Activated CD4-positive, alpha-beta memory T cell treated with anti-CD3 and anti-CD28 coated beads for 36 hours (primary cell): ENCODE measurements at regions of chr14 and their contacts with region 1.

Region 1: DNA sequence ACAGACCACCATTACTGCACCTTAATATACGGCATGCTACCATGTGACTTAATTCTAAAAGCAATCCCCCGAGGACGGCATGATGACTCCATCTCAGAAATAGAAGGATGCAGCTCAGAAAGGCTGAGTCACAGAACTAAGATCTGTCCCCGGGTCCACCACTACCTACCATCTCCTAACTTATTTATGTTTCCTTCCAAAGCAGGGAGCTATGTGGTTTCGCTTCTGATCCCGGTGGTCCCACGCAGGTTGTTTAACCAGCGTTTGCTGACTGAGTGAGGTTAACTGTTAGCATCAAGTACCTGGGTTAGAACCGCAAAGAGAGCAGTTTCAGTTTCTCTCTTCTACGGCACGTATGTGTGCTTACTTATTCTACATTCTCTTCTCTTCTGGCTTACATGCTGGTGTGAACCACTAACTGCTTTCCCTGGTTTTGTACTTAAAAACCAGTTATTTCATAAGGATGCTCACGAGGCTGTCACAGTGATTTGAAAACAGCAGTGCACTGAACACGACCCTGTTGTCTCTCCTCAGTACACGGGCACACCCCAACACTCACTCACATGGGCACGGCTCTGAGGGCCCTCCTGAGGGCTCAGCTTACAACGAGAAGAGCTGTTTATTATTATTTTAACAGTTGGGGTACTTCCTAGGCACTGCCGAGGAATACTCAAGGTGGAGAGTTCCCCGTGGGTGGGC is 66.7 kb downstream of the CCDC88C start:
- DNase-seq: peak; percentile 86
- H3K4me3 Mint-ChIP-seq: peak overlapping the region; percentile 68
- H3K27ac Mint-ChIP-seq: peak overlapping the region; percentile 88
- H3K4me1 Mint-ChIP-seq: peaks cover 93% of the 10 kb centered on the region
- H3K27me3 Mint-ChIP-seq: no peaks in the 10 kb centered on the region

Region 2: DNA sequence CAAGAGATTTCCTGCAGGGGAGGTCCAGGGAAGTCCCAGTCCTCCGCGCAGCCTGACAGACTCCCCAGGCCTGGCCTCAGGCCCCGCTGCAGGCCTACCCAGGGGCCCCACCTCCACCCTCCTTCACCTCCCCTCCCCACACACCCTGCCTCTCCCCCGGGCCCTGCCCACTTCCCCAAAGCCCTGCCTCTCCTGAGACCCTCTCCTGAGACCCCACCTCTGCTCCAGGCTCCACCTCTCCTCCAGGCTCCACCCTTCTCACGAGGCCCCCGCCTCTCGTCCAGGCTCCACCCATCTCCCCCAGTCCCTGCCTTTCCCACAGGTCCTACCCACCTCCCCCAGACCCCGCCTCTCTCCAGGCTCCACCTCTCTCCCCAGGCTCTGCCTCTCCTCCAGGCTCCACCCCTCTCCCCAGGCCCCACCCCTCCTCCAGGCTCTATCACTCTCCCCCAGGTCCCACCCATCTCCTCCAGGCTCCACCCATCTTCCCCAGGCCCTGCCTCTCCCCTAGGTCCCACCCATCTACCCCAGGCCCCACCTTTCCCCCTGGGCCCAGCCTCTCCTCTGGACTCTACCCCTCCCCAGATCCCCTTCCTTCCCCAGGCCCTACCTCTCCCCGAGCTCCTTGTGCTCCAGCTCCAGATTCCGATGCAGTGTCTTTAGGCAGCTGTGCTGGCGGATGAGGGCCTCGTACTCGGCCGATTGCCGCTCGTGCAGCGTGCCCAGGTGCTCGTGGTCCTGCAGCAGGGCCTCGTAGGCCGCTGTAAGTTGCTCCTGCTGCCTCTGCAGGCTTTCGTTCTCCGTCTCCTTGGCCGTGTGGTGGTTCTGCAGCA is 47.7 kb before region 1 on chr14:
- CTCF ChIA-PET with region 1: no interaction called
- POLR2A ChIA-PET with region 1: interaction called, 5 read pairs
- intact Hi-C with region 1: loop called (anchors 1 kb)
- DNase-seq: peak; percentile 94
- H3K4me3 Mint-ChIP-seq: peak overlapping the region; percentile 54
- H3K27ac Mint-ChIP-seq: peak overlapping the region; percentile 95
- H3K4me1 Mint-ChIP-seq: peaks cover 56% of the 10 kb centered on the region
- H3K27me3 Mint-ChIP-seq: no peaks in the 10 kb centered on the region

Region 3: DNA sequence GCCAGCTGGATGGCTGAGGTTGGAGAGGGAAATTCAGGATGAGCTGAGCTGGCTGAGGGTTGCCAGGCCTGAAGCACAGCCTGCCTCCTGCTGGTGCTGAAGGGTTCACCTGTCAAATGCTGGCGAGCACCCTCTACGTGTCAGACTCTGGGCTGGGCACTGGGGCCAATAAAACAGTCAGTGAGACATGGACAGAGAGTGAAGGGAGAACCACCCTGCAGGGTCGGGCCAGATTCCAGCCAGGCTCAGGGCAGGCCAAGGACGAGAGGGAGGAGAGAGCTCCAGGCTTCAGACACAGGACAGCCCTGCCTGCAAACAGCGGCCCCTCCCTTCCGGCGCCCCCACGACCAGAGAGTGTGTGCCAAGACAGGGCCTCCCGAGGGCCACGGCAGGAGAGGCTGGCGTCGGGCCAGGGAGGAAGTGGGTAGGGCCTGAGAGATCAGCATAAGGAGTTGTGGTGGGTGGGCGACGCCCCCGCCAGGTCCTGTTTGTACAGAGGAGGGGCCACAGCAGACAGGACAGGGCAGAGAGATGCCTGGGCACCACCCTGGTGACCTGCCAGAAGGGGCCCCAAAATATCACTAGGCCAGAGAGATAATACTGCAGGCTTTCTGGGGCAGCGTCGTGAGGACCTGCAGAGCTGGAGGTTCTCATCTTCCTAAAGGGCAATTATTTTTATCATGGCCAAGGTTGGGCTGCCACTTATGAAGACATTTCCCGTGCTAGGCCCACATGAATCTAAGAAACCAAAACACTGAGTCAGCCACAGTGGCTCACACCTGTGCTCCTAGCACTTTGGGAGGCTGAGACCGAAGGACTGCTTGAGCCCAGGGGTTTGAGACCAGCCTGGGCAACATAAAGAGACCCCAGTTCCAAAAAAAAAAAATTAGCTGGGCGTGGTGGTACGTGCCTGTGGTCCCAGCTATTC is 33.3 kb before region 1 on chr14:
- CTCF ChIA-PET with region 1: interaction called, 15 read pairs
- POLR2A ChIA-PET with region 1: interaction called, 26 read pairs
- intact Hi-C with region 1: no loop called
- DNase-seq: peak; percentile 92
- H3K4me3 Mint-ChIP-seq: peak overlapping the region; percentile 60
- H3K27ac Mint-ChIP-seq: peak overlapping the region; percentile 94
- H3K4me1 Mint-ChIP-seq: peaks cover 78% of the 10 kb centered on the region
- H3K27me3 Mint-ChIP-seq: no peaks in the 10 kb centered on the region

Region 4: GRCh38 chr14:91367173-91368171 is 16.5 kb after region 1 on chr14:
- CTCF ChIA-PET with region 1: interaction called, 45 read pairs
- POLR2A ChIA-PET with region 1: interaction called, 46 read pairs
- intact Hi-C with region 1: loop called (anchors 1 kb)
- DNase-seq: peak; percentile 78
- H3K4me3 Mint-ChIP-seq: peak overlapping the region; percentile 59
- H3K27ac Mint-ChIP-seq: peak overlapping the region; percentile 80
- H3K4me1 Mint-ChIP-seq: peaks cover 86% of the 10 kb centered on the region
- H3K27me3 Mint-ChIP-seq: no peaks in the 10 kb centered on the region

Region 5: DNA sequence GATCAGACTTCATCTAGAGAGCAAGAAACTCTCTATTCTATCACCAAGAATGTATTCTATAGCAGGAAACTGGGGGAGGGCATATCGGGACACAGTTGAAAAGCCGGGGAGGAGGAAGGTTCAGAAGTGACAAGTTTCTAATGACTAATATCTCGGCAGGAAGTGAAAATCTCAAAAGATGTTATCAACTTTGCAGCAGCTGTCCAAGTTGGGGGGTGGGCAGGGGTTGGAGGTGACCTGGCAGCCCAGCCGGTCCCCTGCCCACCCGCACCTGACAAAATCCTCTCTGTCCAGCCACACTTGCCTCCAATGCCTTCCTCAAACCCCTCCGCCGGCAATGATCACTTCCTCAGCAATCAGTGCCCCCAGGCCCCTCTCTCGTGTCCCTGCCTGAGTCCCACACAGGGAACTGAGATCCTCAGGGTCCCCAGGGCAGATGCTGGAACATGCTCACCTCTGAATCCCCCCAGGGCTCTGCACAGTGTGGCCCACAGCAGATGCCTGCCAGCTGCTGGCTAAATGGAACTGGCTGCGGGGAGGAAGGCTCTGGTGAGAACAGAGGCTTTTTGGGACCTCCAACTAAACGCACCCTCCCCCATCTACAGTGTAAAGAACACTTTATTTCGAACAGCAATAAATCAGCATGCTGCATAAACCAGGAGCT is 22.8 kb after region 1 on chr14:
- CTCF ChIA-PET with region 1: interaction called, 45 read pairs
- POLR2A ChIA-PET with region 1: interaction called, 46 read pairs
- intact Hi-C with region 1: loop called (anchors 1 kb)
- DNase-seq: peak; percentile 78
- H3K4me3 Mint-ChIP-seq: peak overlapping the region; percentile 59
- H3K27ac Mint-ChIP-seq: peak overlapping the region; percentile 86
- H3K4me1 Mint-ChIP-seq: peaks cover 100% of the 10 kb centered on the region
- H3K27me3 Mint-ChIP-seq: no peaks in the 10 kb centered on the region

Region 6: GRCh38 chr14:91396959-91397815 is 46.2 kb after region 1 on chr14:
- CTCF ChIA-PET with region 1: interaction called, 5 read pairs
- POLR2A ChIA-PET with region 1: interaction called, 10 read pairs
- intact Hi-C with region 1: no loop called
- DNase-seq: peak; percentile 84
- H3K4me3 Mint-ChIP-seq: peak overlapping the region; percentile 64
- H3K27ac Mint-ChIP-seq: peak overlapping the region; percentile 89
- H3K4me1 Mint-ChIP-seq: peaks cover 92% of the 10 kb centered on the region
- H3K27me3 Mint-ChIP-seq: no peaks in the 10 kb centered on the region

Region 7: DNA sequence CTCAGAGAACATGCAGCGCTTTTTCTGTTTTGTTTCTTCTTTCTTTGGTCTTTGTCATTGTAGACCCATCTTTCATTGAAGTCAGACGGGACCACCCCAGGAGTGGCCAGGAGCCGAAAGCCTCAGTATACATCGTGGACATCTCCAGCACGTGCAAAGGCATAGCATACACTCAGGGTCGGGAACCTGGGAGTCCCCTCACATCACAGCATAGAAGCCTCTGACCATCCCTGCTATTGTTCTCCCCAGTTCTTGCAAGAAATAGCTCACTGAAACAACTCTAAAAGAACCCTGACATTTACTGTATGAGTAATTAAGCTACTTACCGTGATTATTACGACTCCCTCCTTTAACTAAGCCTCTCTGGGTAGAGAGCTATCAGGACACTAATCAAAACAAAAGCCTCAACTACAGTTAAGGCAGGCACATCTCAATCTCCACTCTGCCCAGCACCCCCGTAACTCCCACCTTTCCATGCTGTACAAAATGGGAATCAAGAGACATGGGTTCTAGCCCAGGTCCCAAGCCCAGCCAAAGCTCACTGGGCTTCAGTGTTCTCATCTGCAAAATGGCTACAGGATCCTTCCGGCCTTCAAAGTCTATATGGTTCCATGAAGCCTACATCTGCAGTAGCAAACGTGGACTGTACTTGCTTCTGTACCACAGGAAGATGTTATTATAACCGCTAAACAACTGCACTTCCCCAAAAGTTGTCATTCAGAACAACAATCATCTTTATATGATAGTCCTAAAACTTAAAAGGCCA is 60.0 kb after region 1 on chr14:
- CTCF ChIA-PET with region 1: interaction called, 58 read pairs
- POLR2A ChIA-PET with region 1: interaction called, 21 read pairs
- intact Hi-C with region 1: loop called (anchors 1 kb)
- DNase-seq: peak; percentile 46
- H3K4me3 Mint-ChIP-seq: peak overlapping the region; percentile 63
- H3K27ac Mint-ChIP-seq: peak overlapping the region; percentile 93
- H3K4me1 Mint-ChIP-seq: peaks cover 87% of the 10 kb centered on the region
- H3K27me3 Mint-ChIP-seq: no peaks in the 10 kb centered on the region